Cardiac septum (tissue), 1 donor: ENCODE measurements at regions of chr1 and their contacts with region 1.

Region 1: GRCh38 chr1:1059494-1060280 is 14.4 kb downstream of the RNF223 start:
- DNase-seq: peak; percentile 87

Region 2: GRCh38 chr1:983799-984473 is 75.8 kb before region 1 on chr1:
- intact Hi-C with region 1: loop called (anchors 1 kb)
- DNase-seq: no peak

Region 3: DNA sequence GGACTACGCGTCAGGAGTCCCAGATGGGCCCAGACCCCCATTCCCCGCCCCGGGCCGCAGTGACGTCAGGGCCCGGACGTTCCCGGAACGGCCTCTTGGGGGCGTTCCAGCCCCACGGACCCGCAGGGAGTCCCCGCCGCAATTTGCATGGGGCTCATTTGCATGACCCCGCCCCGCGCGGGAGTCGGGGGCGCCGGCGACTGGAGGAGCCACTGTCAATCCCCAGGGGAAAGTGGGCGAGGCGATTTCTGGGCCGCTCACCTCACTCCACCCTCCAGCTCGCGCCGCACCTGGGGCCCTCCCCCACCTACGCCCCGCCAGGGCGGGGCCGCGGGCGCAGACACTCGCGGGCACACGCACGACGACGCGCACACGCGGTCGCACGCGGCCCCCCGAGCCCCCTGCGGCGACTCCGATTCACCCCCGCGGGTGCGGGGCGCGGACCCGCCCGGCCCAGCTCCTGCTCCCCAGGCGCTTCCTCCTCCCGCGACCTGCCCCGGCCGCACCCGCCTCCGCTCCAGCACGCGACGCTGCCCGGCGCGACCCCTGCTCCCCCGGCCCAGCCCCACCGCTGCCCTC is 26.6 kb before region 1 on chr1:
- intact Hi-C with region 1: loop called (anchors 2 kb)
- DNase-seq: no peak

Region 4: DNA sequence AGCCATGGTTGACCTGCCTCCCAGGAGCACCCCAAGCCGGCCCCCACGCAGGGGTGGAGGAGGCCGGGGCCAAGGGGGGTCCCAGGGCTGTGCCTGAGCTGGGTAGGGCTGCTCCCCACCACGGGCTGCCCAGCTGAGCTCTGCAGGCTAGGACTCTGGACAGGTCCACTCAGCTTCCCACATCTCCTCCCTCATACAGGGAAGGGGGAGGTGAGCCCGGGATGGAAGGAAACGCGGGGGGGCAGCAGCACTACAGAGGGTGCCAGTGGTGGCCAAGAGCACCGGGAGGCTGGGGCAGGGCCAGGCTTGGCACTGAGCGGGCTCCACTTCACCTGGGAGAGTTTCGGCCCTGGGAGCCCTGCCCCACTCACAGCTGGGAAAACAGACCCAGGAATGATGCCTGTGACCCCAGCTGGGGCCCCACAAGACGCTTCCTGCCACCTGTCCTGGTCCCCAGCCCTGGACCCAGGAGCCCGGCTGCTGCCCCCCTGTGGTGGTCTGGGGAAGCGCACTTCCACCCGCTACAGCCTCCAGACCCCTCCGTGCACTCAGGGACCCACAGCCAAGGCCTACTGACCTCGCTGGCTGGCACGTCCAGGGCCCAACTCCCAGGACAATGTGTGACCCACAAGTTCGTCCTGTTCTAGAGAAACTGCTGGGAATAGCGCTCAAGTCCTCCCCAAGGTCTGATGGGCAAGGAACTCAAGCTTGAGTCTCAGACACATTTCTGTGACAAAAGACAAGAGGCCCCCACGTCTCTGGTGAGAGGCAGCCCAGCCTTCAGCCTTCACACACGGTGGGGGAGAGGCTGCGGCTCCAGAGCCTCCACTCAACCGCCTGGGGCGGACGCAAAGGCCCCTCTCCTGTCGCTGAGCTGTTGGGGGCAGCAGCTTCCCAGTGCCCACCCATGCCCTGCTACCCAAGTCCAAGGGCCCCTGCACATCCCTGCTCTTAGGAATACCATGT is 312.3 kb after region 1 on chr1:
- intact Hi-C with region 1: no loop called
- DNase-seq: no peak